PC-3 (cell line): ENCODE measurements at regions of chr7 and their contacts with region 1.

Region 1: DNA sequence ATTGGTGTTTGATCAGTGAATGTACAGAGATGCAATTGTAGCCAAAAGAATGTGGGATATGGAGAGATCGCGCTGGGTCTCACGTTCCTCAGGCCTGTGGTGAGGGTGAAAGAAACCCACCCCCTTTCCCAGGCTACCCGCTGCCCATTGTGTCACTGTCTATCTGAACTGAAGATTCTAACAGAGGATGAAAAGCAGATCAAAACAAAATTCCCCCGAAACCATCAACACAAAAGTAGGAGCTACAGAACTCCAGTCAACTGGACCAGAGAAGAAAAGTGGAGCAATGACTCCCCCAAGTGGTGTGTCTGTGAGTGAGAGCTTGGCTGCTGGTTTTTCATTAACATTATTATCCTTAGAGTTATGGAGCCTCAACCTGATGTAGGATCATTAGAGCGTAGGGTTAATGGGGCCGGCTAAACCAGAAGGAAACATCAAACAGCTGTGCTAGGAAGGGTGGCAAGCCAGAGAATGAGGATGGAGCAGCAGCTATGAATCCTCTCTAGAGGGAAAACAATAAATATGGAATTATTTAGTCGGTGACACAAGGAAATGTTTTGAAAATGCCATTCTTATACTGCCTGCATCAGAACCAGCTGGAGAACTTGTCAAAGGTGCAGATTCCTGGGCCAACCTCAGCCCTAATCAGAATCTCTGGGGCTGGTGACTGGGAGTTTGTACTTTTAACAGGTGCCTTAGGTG is 38.3 kb downstream of the AKR1B1 start:
- DNase-seq: peak; percentile 79
- ATAC-seq: peak; percentile 84
- H3K4me3 ChIP-seq: no peak overlapping the region
- H3K27ac ChIP-seq: peak overlapping the region; percentile 18; the same call in 1 of the 2 replicates
- H3K4me1 ChIP-seq: peaks cover 32% of the 10 kb centered on the region
- H3K27me3 ChIP-seq: no peaks in the 10 kb centered on the region
- CTCF ChIP-seq: peak; percentile 90

Region 2: DNA sequence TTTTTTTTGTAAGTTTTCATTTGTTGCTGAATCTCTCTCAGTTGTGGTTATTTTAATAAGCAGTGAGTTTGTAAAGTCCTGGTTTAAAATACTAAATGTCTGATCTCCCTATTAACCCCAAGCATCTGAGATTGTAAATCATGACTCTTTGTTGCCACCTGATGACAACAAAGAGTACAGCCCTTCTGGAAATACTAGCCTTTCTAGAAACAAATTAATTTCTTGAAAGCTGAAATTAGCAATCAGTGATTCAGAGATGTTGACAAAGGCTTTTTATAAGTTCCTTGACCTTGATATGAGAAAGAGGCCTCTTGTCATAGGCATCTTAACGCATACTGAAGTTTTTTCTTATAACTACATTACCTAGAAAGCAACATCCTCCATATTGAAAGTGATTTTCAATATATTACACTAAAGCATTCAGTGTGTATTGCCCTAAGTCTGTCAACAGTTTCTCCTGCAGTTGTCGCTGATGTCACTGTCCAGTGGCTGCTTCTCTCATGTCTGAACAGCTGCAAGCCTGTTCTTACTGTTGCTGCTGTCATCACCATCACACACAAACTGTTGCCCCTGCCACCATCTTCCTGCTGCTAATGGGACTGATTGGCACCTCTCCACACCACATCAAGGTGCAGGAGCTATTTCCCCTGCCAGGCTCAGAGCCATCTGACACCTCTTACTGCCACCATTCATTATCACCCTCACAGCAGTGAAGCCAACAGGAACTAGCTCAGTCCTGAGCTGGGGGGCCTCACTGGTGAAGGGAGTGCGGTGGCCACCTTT is 388.5 kb before region 1 on chr7:
- CTCF ChIA-PET with region 1: no interaction called
- POLR2A ChIA-PET with region 1: no interaction called
- intact Hi-C with region 1: loop called (anchors 5 kb)
- DNase-seq: peak; percentile 26
- ATAC-seq: no peak; the same call in 1 of the 2 replicates
- H3K4me3 ChIP-seq: no peak overlapping the region
- H3K27ac ChIP-seq: no peak overlapping the region
- H3K4me1 ChIP-seq: peaks cover 17% of the 10 kb centered on the region
- H3K27me3 ChIP-seq: no peaks in the 10 kb centered on the region
- CTCF ChIP-seq: peak; percentile 58

Region 3: DNA sequence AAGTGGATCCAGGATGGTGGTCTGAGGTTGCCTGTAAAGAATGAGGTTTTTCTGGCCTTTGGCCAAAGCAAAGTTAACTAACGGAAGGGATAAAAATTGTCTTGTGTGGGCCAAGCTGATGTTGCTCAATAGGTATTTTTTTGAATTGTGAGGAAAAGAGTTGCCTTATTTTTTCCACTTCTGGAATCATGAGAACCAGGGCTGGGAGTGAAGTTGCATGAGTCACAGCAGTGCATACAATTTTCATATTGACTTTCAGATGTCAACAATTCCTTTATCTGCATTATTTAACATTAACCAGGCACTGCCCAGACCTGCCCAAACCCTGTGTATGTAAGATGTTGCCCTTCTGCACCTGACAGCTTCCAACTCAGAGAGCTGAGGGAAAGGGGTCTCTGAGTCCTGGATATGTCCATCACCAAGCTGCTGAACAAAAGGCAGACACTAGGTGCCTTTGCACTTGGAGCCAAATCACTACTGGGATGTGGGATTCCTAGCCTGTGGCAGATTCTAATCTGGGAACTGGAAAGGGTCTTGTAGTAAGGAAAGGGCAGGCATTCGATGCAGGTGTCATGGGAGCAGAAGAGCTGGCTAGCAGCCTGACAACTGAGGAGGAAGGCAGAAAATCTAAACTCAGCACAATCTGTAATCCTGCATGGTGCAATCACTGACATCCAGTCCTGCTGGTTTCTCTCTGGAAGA is 51.6 kb before region 1 on chr7:
- CTCF ChIA-PET with region 1: interaction called, 6 read pairs
- POLR2A ChIA-PET with region 1: no interaction called
- intact Hi-C with region 1: loop called (anchors 2 kb)
- DNase-seq: peak; percentile 95
- ATAC-seq: peak; percentile 68
- H3K4me3 ChIP-seq: peak overlapping the region; percentile 37; the same call in 1 of the 2 replicates
- H3K27ac ChIP-seq: peak overlapping the region; percentile 96
- H3K4me1 ChIP-seq: peaks cover 55% of the 10 kb centered on the region
- H3K27me3 ChIP-seq: no peaks in the 10 kb centered on the region
- CTCF ChIP-seq: no peak